IMR-90 (cell line): ENCODE measurements at regions of chr10 and their contacts with region 1.

Region 1: DNA sequence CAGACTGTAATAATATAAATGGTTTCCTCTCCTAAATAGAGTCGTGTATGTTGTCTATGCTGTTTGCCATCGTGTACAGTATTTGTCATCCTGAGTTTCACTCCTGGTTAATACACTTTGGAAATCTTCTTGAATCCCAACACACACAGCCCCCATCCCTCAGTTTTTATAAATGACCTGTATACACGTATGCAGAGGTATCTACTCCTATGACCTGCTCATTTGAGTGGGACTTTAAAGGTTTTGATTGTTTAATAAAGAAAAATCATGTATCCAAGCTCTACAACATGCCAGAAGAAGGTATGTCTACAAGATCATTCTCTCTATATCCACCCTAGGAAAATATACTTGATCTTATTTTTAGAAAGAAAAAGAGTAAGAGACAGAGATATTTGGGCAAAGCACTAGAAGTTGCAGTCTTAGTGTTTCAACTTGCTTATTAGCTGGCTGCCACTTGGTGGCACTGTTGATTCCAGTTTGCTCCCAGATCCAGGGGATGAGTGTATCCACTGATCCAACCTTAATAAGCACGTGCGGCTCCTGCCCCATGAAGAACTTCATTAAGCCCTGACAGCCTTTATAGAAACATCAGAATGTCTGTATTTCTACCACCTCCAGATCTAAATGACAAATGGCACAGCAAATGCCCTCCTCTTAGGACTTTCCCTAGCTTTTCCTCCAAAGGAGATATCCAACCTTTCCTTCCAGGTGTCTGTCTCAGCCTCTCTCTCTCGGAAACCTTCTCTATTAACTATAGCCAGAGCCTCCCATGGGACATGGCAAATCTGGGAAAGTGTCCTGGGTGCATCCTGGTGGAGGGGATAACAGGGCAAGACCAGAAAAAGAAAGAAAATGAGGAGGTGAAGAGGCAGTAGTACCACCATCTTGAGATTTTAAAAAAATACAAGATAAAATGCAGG is 181.6 kb upstream of the NEBL start:
- DNase-seq: peak; percentile 61
- ATAC-seq: peak; percentile 98
- H3K4me3 ChIP-seq: no peak overlapping the region
- H3K27ac ChIP-seq: no peak overlapping the region
- H3K4me1 ChIP-seq: no peaks in the 10 kb centered on the region
- H3K27me3 ChIP-seq: 0 out of 2 replicates have a peak, but pooled peaks cover 2% of the 10 kb centered on the region
- CTCF ChIP-seq: peak; percentile 73
- POLR2A ChIP-seq: no peak
- RAD21 ChIP-seq: peak; percentile 84

Region 2: GRCh38 chr10:21173812-21174714 is 95.4 kb after region 1 on chr10:
- CTCF ChIA-PET with region 1: no interaction called
- POLR2A ChIA-PET with region 1: no interaction called
- dilution Hi-C with region 1: no loop called
- in situ Hi-C with region 1: no loop called
- intact Hi-C with region 1: no loop called
- DNase-seq: no peak
- ATAC-seq: peak; percentile 63
- H3K4me3 ChIP-seq: peak overlapping the region; percentile 28; the same call in 1 of the 2 replicates
- H3K27ac ChIP-seq: no peak overlapping the region
- H3K4me1 ChIP-seq: no peaks in the 10 kb centered on the region
- H3K27me3 ChIP-seq: peaks cover 27% of the 10 kb centered on the region
- CTCF ChIP-seq: no peak
- POLR2A ChIP-seq: no peak
- RAD21 ChIP-seq: no peak

Region 3: GRCh38 chr10:21273400-21273932 is 194.8 kb after region 1 on chr10:
- CTCF ChIA-PET with region 1: no interaction called
- POLR2A ChIA-PET with region 1: no interaction called
- dilution Hi-C with region 1: no loop called
- in situ Hi-C with region 1: loop called (anchors 5 kb)
- intact Hi-C with region 1: loop called (anchors 1 kb)
- DNase-seq: no peak
- ATAC-seq: no peak
- H3K4me3 ChIP-seq: no peak overlapping the region
- H3K27ac ChIP-seq: no peak overlapping the region
- H3K4me1 ChIP-seq: no peaks in the 10 kb centered on the region
- H3K27me3 ChIP-seq: peaks cover 2% of the 10 kb centered on the region; the same call in 1 of the 2 replicates
- CTCF ChIP-seq: no peak
- POLR2A ChIP-seq: no peak
- RAD21 ChIP-seq: no peak

Region 4: DNA sequence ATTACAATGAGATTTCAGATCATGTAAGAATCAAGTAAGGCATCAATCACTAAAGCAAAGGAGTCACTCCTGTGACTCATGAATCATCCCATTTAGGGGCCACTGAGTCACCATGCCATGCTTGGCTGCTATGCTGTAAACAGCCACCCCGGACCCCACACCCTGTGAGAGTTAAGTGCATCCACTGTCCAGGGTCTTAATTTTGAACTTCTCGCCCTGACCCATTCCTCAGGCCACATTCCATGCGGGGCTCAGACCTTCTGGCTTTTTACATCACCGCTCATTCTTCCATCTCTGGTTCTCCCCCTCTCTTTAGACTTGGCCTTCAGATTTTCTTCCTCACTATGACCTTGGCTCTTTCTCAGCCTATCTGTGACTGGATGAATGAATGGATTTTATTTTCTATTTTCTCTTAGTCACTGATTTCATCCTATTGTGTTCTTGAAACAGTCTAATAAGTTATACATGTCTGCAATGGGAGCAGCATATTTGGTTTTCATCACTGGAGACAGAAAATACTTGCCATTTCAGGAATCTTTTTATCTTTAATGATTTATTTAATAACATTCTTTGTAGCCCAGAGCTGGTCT is 207.2 kb after region 1 on chr10:
- CTCF ChIA-PET with region 1: no interaction called
- POLR2A ChIA-PET with region 1: no interaction called
- dilution Hi-C with region 1: no loop called
- in situ Hi-C with region 1: no loop called
- intact Hi-C with region 1: no loop called
- DNase-seq: peak; percentile 21
- ATAC-seq: peak; percentile 17; the same call in 1 of the 2 replicates
- H3K4me3 ChIP-seq: no peak overlapping the region
- H3K27ac ChIP-seq: no peak overlapping the region
- H3K4me1 ChIP-seq: 0 out of 2 replicates have a peak, but pooled peaks cover 2% of the 10 kb centered on the region
- H3K27me3 ChIP-seq: no peaks in the 10 kb centered on the region
- CTCF ChIP-seq: no peak
- POLR2A ChIP-seq: no peak
- RAD21 ChIP-seq: no peak

Region 5: DNA sequence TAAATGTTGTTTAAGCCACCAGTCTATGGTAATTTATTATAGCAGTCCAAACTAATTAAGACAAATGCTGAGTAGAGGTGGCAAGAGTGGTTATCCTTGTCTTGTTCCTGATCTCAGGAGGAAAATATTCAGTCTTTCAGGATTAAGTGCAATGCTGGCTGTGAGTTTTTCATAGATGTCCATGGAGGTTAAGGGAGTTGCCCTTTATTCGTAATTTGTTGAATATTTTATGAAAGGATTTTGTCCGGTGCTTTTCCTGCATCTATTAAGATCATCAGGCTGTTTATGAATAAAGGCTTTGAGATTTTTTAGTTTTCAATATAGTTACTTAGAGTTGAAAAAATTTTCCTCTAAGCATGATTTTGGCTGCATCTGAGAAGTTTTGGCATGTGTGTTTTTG is 1448.8 kb after region 1 on chr10:
- CTCF ChIA-PET with region 1: no interaction called
- POLR2A ChIA-PET with region 1: no interaction called
- dilution Hi-C with region 1: no loop called
- in situ Hi-C with region 1: no loop called
- intact Hi-C with region 1: no loop called
- DNase-seq: no peak
- ATAC-seq: no peak
- H3K4me3 ChIP-seq: no peak overlapping the region
- H3K27ac ChIP-seq: no peak overlapping the region
- H3K4me1 ChIP-seq: no peaks in the 10 kb centered on the region
- H3K27me3 ChIP-seq: no peaks in the 10 kb centered on the region
- CTCF ChIP-seq: no peak
- POLR2A ChIP-seq: no peak
- RAD21 ChIP-seq: no peak

Region 6: DNA sequence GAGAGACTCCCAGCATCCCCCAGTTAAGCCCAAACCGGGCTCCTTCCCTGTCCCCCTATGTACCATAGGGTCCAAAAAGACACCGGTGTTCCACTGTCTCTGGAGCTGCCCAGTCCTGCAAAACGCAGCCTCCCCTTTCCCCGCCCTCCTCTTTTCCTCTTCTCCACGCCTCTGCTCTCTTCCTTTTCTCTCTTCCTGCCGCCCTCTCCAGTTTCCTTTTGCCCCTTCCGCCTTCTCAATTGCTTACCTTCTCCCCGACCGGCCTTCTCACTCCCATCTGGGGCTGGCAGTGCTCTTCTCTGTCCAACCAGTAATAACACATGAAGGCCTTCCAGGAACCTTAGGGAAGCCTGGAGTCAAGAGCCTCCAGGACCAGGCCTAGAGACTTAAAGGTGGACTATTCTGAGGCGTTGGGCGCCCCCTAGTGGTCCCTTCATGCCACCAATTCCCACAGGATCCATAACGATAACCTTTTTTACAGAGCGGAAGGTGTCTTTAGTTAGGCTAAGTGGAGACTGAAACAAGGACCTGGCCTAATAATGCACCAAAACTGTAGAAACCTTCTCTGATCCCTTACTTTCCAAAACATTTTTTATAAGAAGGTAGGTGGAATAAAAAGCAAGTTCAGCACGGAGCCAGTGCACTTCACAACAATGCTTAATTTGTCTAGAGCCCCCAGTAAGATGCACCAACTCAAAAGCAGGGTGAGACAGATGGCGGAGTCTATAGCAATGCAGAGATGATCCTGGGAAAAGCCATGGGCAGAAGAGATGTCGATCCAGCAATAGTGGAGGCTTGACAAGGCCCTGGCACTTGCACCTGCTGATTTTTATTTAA is 1989.5 kb after region 1 on chr10:
- CTCF ChIA-PET with region 1: no interaction called
- POLR2A ChIA-PET with region 1: no interaction called
- dilution Hi-C with region 1: no loop called
- in situ Hi-C with region 1: no loop called
- intact Hi-C with region 1: loop called (anchors 5 kb)
- DNase-seq: peak; percentile 63
- ATAC-seq: peak; percentile 84
- H3K4me3 ChIP-seq: no peak overlapping the region
- H3K27ac ChIP-seq: no peak overlapping the region
- H3K4me1 ChIP-seq: no peaks in the 10 kb centered on the region
- H3K27me3 ChIP-seq: peaks cover 6% of the 10 kb centered on the region
- CTCF ChIP-seq: peak; percentile 72
- POLR2A ChIP-seq: no peak
- RAD21 ChIP-seq: peak; percentile 67